ENCODE measurements at regions of chr3 and their contacts with region 1.

Region 1: DNA sequence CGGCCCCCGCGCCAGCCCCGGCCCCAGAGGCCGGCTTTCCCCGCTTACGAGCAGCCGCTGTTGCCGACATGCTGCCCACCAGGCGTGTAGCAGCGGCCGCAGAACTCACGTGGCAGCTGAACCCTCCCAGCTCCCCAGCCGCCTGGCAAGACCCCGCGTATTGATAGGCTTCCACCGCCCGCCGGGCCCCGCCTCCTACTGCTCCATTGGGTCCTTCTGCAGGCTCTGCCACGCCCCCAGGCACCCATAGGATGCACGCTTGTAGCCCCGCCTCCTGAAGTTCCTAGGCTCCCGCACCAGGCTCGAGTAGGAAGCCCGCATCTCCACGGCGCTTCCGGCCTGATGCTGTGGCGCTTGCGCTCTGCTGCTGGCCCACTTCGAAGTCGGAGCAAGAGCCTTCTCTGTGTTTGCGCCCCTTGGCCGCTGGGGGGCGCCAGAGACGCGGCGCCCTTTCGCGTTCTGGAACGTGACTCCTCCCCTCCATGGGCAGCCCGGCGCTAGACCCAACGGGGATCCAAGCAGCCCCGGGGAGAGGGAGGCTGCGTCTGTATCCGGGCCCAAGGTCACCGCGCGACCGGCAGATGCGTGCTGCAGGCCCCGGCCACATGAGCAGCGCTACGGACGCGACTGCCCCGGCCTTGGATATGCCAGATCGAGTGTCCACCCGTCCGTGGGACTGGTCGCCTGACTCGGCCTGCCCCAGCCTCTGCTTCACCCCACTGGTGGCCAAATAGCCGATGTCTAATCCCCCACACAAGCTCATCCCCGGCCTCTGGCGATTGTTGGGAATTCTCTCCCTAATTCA is at the starts of genes PARP3 and RRP9:
- DNase-seq: peak; percentile 99 to 100
- H3K4me3 ChIP-seq: peak within 1 kb of the TSS; percentile 69 to 76
- H3K27ac ChIP-seq: peak within 1 kb of the TSS; percentile 88
- H3K4me1 ChIP-seq: peaks cover 31% of the 10 kb centered on the region
- H3K27me3 ChIP-seq: no peaks in the 10 kb centered on the region
- CTCF ChIP-seq: peak; percentile 98 to 100 (median 99)
- POLR2A ChIP-seq: peak in 1 of 2 donors; percentile 40
- total RNA-seq, gene PARP3: 20.6 TPM
- total RNA-seq, gene RRP9: 12.5 TPM

Region 2: DNA sequence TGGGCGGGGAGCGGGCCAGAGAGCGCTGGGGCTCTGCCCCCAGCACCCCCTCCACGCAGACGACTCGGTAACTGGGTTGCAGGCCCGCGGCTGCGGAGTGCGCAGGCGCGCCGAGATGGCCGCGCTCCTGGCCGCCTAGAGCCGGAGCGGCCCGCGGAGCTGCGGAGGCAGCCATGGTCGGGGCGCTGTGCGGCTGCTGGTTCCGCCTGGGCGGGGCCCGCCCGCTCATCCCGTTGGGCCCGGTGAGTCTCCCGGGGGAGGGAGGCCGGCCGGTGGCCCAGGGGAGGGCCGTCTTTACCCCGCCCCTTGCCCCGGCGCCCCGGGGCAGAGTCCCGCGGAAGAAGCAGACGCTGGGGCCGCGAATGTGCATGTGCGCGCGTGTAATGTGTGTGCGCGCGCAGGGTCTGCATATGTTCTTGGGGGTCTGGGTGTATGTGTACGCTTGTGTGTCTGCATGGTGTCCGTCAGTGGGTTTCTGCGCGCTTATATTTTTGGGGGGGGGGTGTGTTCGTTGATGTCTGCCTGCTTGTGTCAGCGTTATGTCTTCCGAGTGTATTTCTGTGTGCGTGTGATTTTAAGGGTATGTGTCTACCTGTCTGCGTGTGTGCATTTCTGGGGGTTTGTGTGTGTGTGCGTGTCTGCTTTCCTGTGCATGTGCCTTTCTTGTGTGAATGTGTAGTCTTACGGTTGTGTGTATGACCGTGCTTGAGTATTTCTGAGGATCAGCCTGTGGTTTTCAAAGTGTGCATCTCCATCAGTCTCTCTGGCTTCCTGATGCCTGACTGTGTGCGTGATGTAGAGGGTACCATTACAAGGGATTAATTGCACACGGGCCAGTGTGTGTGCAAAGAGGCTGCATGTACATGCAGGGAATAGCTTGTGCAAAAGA is 33.2 kb after region 1 on chr3 and contains the start of gene ABHD14A:
- intact Hi-C with region 1: loop called (anchors 2 kb)
- DNase-seq: no peak
- H3K4me3 ChIP-seq: peak within 1 kb of the TSS; percentile 61 to 81
- H3K27ac ChIP-seq: peak within 1 kb of the TSS; percentile 94
- H3K4me1 ChIP-seq: peaks cover 30% of the 10 kb centered on the region
- H3K27me3 ChIP-seq: no peaks in the 10 kb centered on the region
- CTCF ChIP-seq: no peak
- POLR2A ChIP-seq: peak in 1 of 2 donors; percentile 42
- total RNA-seq, gene ABHD14A: 31.9 TPM

Region 3: GRCh38 chr3:52144034-52144795 is 202.2 kb after region 1 on chr3:
- intact Hi-C with region 1: loop called (anchors 5 kb)
- DNase-seq: peak in 1 of 2 donors; percentile 88
- H3K4me3 ChIP-seq: no peak overlapping the region
- H3K27ac ChIP-seq: no peak overlapping the region
- H3K4me1 ChIP-seq: peaks cover 4% of the 10 kb centered on the region
- H3K27me3 ChIP-seq: no peaks in the 10 kb centered on the region
- CTCF ChIP-seq: peak; percentile 95 to 99 (median 99)
- POLR2A ChIP-seq: no peak